B cell (primary cell): ENCODE measurements at regions of chr2 and their contacts with region 1.

Region 1: DNA sequence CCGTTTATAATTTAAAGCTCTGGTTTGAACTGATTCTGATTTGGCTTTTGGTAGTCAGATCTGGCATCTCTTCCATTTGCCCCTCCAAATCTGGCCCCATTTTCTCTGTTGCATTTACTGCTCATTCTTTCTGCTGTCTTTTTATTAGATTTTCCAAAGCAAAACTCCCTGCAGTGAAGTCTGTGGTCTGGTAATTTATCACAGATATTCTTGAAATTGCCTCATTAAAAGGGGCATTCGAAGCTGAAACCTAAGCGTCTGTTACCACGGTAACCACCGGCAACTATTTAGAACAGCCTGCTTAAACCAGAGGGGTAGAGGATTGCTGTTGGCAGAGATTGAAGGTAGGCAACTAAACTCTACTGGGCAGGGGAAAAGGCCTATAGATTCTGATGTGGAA is 111.5 kb upstream of the UPP2 start:
- DNase-seq: no peak
- ATAC-seq: no peak
- H3K4me3 ChIP-seq: no peak overlapping the region
- H3K4me3 Mint-ChIP-seq: no peak overlapping the region
- H3K27ac ChIP-seq: no peak overlapping the region
- H3K27ac Mint-ChIP-seq: no peak overlapping the region
- H3K4me1 ChIP-seq: no peaks in the 10 kb centered on the region
- H3K4me1 Mint-ChIP-seq: no peaks in the 10 kb centered on the region
- H3K27me3 ChIP-seq: peaks cover 0 to 2% (median 0%) of the 10 kb centered on the region in 4 experiments
- H3K27me3 Mint-ChIP-seq: peaks cover 7% of the 10 kb centered on the region
- CTCF ChIP-seq: no peak

Region 2: DNA sequence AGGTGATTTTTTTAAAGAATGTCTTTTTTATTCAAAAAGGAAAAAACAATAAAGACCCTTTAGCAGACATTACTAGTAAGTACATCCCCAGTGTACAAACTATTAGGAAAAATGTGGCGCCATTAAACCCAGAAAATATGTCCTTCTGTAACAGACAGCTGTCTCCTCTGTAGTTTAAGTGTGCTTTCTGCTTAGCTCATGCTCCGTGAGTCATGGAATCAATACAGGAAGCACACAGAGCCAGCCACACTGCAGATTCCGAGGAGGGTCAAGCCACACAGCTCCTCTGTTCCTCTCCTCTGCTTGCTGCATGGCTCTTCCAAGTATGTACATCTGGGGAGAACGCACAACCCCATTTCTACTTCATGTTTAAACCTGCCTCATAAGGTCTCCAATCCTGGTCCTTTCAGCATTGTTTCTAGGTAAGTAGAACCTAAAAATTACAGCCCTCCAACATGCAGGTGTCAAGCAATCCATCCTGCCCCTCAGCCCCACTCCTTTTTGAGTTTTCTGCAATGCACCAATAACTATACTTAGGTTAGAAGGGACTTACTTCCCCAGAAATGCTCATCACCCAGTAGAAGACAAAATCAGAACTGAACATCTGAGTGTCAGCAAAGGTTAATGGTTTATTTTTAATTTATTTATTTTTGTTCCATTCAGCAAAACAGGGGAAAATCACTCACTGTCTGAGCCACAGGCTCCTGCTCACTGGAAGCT is 151.6 kb before region 1 on chr2:
- CTCF ChIA-PET with region 1: no interaction called
- POLR2A ChIA-PET with region 1: no interaction called
- intact Hi-C with region 1: loop called (anchors 5 kb)
- DNase-seq: no peak
- ATAC-seq: no peak
- H3K4me3 ChIP-seq: no peak overlapping the region
- H3K4me3 Mint-ChIP-seq: no peak overlapping the region
- H3K27ac ChIP-seq: no peak overlapping the region
- H3K27ac Mint-ChIP-seq: no peak overlapping the region
- H3K4me1 ChIP-seq: no peaks in the 10 kb centered on the region
- H3K4me1 Mint-ChIP-seq: peaks cover 7% of the 10 kb centered on the region
- H3K27me3 ChIP-seq: no peaks in the 10 kb centered on the region
- H3K27me3 Mint-ChIP-seq: no peaks in the 10 kb centered on the region
- CTCF ChIP-seq: no peak